ENCODE measurements at regions of chr2 and their contacts with region 1.

Region 1: GRCh38 chr2:118088051-118089024 is at the start of gene INSIG2:
- DNase-seq: peak; percentile 98
- H3K4me3 Mint-ChIP-seq: peak within 1 kb of the TSS; percentile 93
- H3K27ac Mint-ChIP-seq: peak within 1 kb of the TSS; percentile 92
- H3K4me1 Mint-ChIP-seq: peaks cover 16% of the 10 kb centered on the region
- H3K27me3 Mint-ChIP-seq: peaks cover 9% of the 10 kb centered on the region
- total RNA-seq, gene INSIG2: 35.2 and 35.6 TPM in 2 replicates

Region 2: DNA sequence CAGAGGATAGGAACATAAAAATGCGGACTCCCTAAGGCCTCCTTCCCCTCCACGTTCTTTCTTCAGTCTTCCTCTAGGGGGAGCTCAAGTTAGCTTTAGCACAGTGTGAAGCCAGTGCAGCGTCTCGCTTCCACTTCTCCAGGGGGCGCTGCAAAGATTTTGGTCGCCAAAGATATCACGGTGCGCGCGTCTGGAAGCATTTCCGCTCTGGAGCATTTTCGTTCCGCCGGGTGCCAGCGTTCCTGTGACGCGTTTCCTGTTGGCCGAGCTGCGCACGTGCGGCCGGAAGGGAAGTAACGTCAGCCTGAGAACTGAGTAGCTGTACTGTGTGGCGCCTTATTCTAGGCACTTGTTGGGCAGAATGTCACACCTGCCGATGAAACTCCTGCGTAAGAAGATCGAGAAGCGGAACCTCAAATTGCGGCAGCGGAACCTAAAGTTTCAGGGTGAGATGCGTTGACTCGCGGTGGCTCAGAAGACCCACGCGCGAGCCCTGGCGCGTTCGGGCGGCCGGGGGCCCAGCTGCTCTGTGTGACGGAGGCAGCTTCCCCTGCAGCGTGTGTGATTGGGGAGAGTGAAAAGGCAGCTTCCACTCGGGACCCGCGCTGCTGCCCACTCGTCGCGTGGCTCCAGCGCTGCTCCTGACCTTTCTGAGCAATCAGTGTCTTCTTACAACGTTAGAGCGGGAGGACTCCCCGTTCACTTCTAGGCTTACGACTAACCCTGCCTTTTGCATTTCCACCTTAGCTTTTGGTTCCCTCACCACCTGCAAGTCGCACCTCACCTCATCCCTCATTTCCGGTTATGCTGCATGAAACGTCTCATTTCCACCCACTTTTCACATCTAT is 273.7 kb before region 1 on chr2 and contains the start of gene DDX18:
- intact Hi-C with region 1: loop called (anchors 1 kb)
- DNase-seq: peak; percentile 99
- H3K4me3 Mint-ChIP-seq: peak within 1 kb of the TSS; percentile 97
- H3K27ac Mint-ChIP-seq: peak within 1 kb of the TSS; percentile 95
- H3K4me1 Mint-ChIP-seq: peaks cover 30% of the 10 kb centered on the region
- H3K27me3 Mint-ChIP-seq: no peaks in the 10 kb centered on the region
- total RNA-seq, gene DDX18: 150 and 157 TPM in 2 replicates

Region 3: GRCh38 chr2:118013724-118014491 is 74.4 kb before region 1 on chr2 and contains the start of gene CCDC93:
- intact Hi-C with region 1: loop called (anchors 1 kb)
- DNase-seq: peak; percentile 97
- H3K4me3 Mint-ChIP-seq: peak within 1 kb of the TSS; percentile 96
- H3K27ac Mint-ChIP-seq: peak within 1 kb of the TSS; percentile 91
- H3K4me1 Mint-ChIP-seq: peaks cover 41% of the 10 kb centered on the region
- H3K27me3 Mint-ChIP-seq: no peaks in the 10 kb centered on the region
- total RNA-seq, gene CCDC93: 30.3 and 34.4 TPM in 2 replicates

Region 4: GRCh38 chr2:118130385-118130784 is 42.0 kb after region 1 on chr2:
- intact Hi-C with region 1: loop called (anchors 1 kb)
- DNase-seq: no peak
- H3K4me3 Mint-ChIP-seq: no peak overlapping the region
- H3K27ac Mint-ChIP-seq: peak overlapping the region; percentile 14
- H3K4me1 Mint-ChIP-seq: peaks cover 10% of the 10 kb centered on the region
- H3K27me3 Mint-ChIP-seq: peaks cover 9% of the 10 kb centered on the region

Region 5: DNA sequence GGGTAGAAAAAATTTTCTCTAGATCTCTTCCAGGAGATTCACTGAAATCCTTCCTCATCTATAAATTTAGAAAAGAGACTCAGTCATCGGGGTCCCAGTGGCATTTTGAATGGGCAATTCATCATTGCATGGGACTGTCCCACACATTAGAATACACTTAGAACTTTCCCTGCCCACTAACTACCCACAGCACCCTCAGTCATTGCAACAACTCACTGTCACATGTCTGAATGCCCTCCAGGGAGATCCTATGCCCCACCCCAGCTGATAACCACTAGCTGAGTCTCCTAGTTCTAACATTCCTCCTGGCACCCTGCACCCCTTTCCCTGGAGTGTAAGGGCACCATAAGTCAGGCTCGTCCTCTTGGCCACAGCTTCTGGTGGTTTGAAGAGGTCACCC is 89.5 kb after region 1 on chr2:
- intact Hi-C with region 1: loop called (anchors 2 kb)
- DNase-seq: no peak
- H3K4me3 Mint-ChIP-seq: peak overlapping the region; percentile 60
- H3K27ac Mint-ChIP-seq: peak overlapping the region; percentile 94
- H3K4me1 Mint-ChIP-seq: peaks cover 28% of the 10 kb centered on the region
- H3K27me3 Mint-ChIP-seq: peaks cover 3% of the 10 kb centered on the region

Region 6: DNA sequence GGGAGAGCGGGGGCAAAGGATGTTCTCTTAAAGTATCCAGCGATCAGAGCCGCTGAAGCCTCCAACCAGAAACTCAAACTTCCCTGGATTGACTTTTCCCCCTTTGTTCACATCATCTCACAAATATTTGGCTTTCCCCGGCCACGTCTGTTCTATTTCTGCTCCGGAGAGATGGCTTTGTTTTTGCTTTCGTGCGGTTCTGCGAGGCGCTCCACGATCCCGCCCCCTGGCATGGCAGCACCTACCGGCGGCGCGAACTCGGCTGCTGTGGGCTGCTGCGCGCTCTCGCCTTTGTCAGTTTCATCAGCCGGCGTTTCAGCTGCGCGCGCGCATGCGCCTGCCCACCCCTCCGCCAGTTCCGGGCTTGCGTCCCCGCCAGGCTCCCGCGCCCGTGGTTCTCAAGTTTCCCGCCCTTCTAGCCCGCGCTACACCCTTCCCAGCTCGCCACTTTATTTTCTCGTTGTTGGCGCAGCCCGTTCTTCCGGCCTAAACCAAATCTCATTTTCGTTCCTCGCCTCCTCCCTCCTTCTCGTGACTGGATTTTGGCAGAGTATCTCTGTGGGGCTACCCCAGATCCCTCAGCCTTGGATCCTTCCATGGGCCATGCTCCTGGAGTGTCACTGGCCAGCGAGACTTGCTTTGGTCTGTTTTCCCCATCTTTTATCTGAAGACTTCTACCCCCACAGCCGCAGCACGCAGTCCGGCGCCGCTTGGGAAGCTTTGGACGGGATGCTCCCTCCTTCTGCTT is 97.9 kb after region 1 on chr2:
- intact Hi-C with region 1: loop called (anchors 1 kb)
- DNase-seq: peak; percentile 95
- H3K4me3 Mint-ChIP-seq: peak overlapping the region; percentile 89
- H3K27ac Mint-ChIP-seq: peak overlapping the region; percentile 96
- H3K4me1 Mint-ChIP-seq: peaks cover 25% of the 10 kb centered on the region
- H3K27me3 Mint-ChIP-seq: no peaks in the 10 kb centered on the region

Region 7: DNA sequence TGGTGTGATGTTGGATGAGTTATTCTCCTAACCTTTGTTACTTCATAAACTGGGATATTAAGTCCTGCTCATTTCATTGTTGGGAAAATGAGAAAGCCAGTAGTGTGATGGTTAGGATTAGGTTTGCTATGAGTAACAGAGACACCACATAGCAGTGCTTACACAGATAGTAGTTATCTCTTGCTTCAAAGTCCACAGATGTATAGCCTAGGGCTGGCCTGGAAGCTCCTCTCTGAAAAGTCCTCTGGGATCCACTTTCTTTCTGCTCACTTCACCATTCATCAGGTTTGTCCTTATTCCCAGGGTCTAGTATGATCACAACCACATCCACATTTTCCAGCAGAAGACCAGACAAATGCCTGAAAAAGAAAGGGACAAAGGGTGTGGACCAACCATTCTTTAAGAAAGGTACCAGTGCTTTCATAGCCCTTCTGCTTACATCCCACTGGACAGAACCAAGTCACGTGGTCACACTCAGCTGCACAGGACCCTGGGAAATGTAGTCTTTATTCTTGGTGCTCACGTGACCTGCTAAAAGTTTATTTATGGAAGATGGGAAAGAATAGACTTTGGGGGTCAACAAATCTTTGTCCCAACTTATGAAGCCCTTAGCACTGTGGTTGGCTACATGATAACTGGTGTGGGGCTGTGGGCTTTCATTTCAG is 108.8 kb after region 1 on chr2:
- intact Hi-C with region 1: no loop called
- DNase-seq: no peak
- H3K4me3 Mint-ChIP-seq: no peak overlapping the region
- H3K27ac Mint-ChIP-seq: no peak overlapping the region
- H3K4me1 Mint-ChIP-seq: peaks cover 6% of the 10 kb centered on the region
- H3K27me3 Mint-ChIP-seq: peaks cover 5% of the 10 kb centered on the region

Measured in activated CD4-positive, alpha-beta T cell treated with anti-CD3 and anti-CD28 coated beads, Interleukin-2, amount 10 ng/mL, durations not matched to agents 24 days and 14 days (primary cell).